Pancreas (tissue), 10 donors: ENCODE measurements at regions of chr20 and their contacts with region 1.

Region 1: GRCh38 chr20:31452575-31452974 is 12.1 kb downstream of the DEFB123 start:
- DNase-seq: no peak
- ATAC-seq: no peak
- H3K4me3 ChIP-seq: no peak overlapping the region
- H3K27ac ChIP-seq: no peak overlapping the region
- H3K4me1 ChIP-seq: no peaks in the 10 kb centered on the region
- H3K27me3 ChIP-seq: peaks cover 0 to 2% (median 1%) of the 10 kb centered on the region in 4 donors
- CTCF ChIP-seq: no peak

Region 2: GRCh38 chr20:31508517-31509244 is 56.1 kb after region 1 on chr20:
- intact Hi-C with region 1: loop called in 1 of 3 experiments (anchors 10 kb)
- DNase-seq: no peak
- ATAC-seq: no peak
- H3K4me3 ChIP-seq: no peak overlapping the region
- H3K27ac ChIP-seq: no peak overlapping the region
- H3K4me1 ChIP-seq: no peaks in the 10 kb centered on the region
- H3K27me3 ChIP-seq: peaks cover 0 to 9% (median 0%) of the 10 kb centered on the region in 4 donors
- CTCF ChIP-seq: no peak

Region 3: GRCh38 chr20:31523361-31524283 is 71.0 kb after region 1 on chr20:
- intact Hi-C with region 1: no loop called
- DNase-seq: no peak
- ATAC-seq: peak in 3 of 4 donors; percentile 25 to 66 (median 64)
- H3K4me3 ChIP-seq: no peak overlapping the region
- H3K27ac ChIP-seq: no peak overlapping the region
- H3K4me1 ChIP-seq: peaks cover 4 to 36% (median 4%) of the 10 kb centered on the region in 3 donors
- H3K27me3 ChIP-seq: no peaks in the 10 kb centered on the region
- CTCF ChIP-seq: no peak

Region 4: GRCh38 chr20:31572701-31573554 is 120.4 kb after region 1 on chr20:
- intact Hi-C with region 1: no loop called
- DNase-seq: peak; percentile 95 to 98 (median 96)
- ATAC-seq: peak; percentile 87 to 91 (median 89)
- H3K4me3 ChIP-seq: peak overlapping the region; percentile 13 to 52 (median 30)
- H3K27ac ChIP-seq: peak overlapping the region; percentile 78 to 91 (median 80)
- H3K4me1 ChIP-seq: peaks cover 7 to 12% (median 7%) of the 10 kb centered on the region in 3 donors
- H3K27me3 ChIP-seq: no peaks in the 10 kb centered on the region
- CTCF ChIP-seq: no peak